ENCODE measurements at regions of chr1 and their contacts with region 1.

Region 1: GRCh38 chr1:54127594-54128300 is 25.1 kb downstream of the CDCP2 start:
- DNase-seq: no peak
- H3K4me3 ChIP-seq: no peak overlapping the region
- CTCF ChIP-seq: no peak
- POLR2A ChIP-seq: no peak

Region 2: GRCh38 chr1:53837924-53838652 is 289.7 kb before region 1 on chr1 and contains the start of gene NDC1:
- intact Hi-C with region 1: no loop called
- DNase-seq: peak; percentile 94 to 96
- H3K4me3 ChIP-seq: peak within 1 kb of the TSS; percentile 77
- CTCF ChIP-seq: no peak
- POLR2A ChIP-seq: no peak
- total RNA-seq, gene NDC1: 6.8 to 13.3 (median 11.1) TPM

Region 3: GRCh38 chr1:53919675-53920066 is 208.1 kb before region 1 on chr1:
- intact Hi-C with region 1: no loop called
- DNase-seq: no peak
- H3K4me3 ChIP-seq: no peak overlapping the region
- CTCF ChIP-seq: no peak
- POLR2A ChIP-seq: no peak

Region 4: DNA sequence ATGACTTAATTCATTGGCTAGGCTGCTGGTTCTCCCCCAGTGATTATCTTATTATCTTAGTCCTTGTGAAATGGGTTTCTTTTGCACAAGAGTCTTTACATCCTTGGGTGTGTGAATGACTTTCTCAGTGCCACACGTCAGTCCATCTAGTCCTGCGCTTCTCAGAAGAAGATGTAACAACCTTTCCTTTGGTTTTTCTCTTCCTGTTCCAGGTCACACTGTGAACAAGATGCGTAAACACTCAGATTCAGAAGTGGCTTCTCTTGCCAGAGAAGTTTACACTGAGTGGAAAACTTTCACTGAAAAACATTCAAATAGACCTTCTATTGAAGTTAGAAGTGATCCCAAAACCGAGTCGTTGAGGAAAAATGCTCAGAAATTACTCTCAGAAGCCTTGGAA is 39.4 kb before region 1 on chr1:
- intact Hi-C with region 1: loop called (anchors 2 kb)
- DNase-seq: no peak
- H3K4me3 ChIP-seq: no peak overlapping the region
- CTCF ChIP-seq: no peak
- POLR2A ChIP-seq: no peak